ENCODE measurements at regions of chr14 and their contacts with region 1.

Region 1: GRCh38 chr14:69242311-69243224 is 17.4 kb upstream of the GALNT16 start:
- DNase-seq: peak; percentile 77
- H3K4me3 ChIP-seq: peak overlapping the region in 1 of 4 donors; percentile 1
- H3K27ac ChIP-seq: peak overlapping the region in 3 of 4 donors; percentile 42 to 59 (median 50)
- H3K4me1 ChIP-seq: peaks cover 2 to 15% (median 11%) of the 10 kb centered on the region in 4 donors
- H3K27me3 ChIP-seq: no peaks in the 10 kb centered on the region
- CTCF ChIP-seq: peak; percentile 69 to 84 (median 79)
- EP300 ChIP-seq: no peak
- POLR2A ChIP-seq: no peak

Region 2: DNA sequence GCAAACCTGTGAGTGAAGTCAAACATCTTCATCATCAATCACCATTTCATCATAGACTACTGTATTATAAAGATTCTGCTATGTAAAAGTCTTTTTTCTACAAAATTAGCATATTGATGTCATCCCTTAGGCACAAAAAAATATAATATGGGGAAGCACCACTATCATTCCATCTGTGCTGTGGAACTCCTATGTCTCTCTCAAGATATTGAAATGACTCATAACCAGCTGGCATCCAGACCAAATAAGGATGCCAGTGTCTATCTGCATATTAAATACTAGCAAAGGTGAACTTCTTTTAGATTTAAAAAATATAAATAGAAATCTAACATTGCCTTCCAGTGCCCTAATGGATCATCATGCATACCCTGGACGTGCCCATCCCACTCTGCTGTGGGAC is 71.7 kb before region 1 on chr14:
- intact Hi-C with region 1: no loop called
- DNase-seq: no peak
- H3K4me3 ChIP-seq: no peak overlapping the region
- H3K27ac ChIP-seq: no peak overlapping the region
- H3K4me1 ChIP-seq: no peaks in the 10 kb centered on the region
- H3K27me3 ChIP-seq: no peaks in the 10 kb centered on the region
- CTCF ChIP-seq: no peak
- EP300 ChIP-seq: no peak
- POLR2A ChIP-seq: no peak

Region 3: GRCh38 chr14:69346710-69347109 is 104.1 kb after region 1 on chr14:
- intact Hi-C with region 1: loop called (anchors 5 kb)
- DNase-seq: no peak
- H3K4me3 ChIP-seq: no peak overlapping the region
- H3K27ac ChIP-seq: no peak overlapping the region
- H3K4me1 ChIP-seq: peaks cover 0 to 12% (median 8%) of the 10 kb centered on the region in 4 donors
- H3K27me3 ChIP-seq: no peaks in the 10 kb centered on the region
- CTCF ChIP-seq: peak in 3 of 4 experiments; percentile 26 to 43 (median 40)
- EP300 ChIP-seq: no peak
- POLR2A ChIP-seq: no peak

Region 4: GRCh38 chr14:69398053-69398817 is 155.7 kb after region 1 on chr14 and contains the starts of genes ERH and SLC39A9:
- intact Hi-C with region 1: loop called (anchors 5 kb)
- DNase-seq: peak; percentile 98
- H3K4me3 ChIP-seq: peak within 1 kb of the TSS; percentile 71 to 91 (median 84)
- H3K27ac ChIP-seq: peak within 1 kb of the TSS; percentile 88 to 94 (median 90)
- H3K4me1 ChIP-seq: peaks cover 0 to 55% (median 43%) of the 10 kb centered on the region in 4 donors
- H3K27me3 ChIP-seq: no peaks in the 10 kb centered on the region
- CTCF ChIP-seq: no peak
- EP300 ChIP-seq: peak in 1 of 4 donors; percentile 46
- POLR2A ChIP-seq: peak; percentile 29 to 65
- total RNA-seq, gene ERH: 65.6 to 106 (median 87.9) TPM
- total RNA-seq, gene SLC39A9: 39.0 to 47.4 (median 42.0) TPM

Region 5: GRCh38 chr14:69460093-69460701 is 217.6 kb after region 1 on chr14:
- intact Hi-C with region 1: loop called (anchors 1 kb)
- DNase-seq: peak; percentile 77
- H3K4me3 ChIP-seq: no peak overlapping the region
- H3K27ac ChIP-seq: peak overlapping the region in 2 of 4 donors; percentile 28 to 38
- H3K4me1 ChIP-seq: no peaks in the 10 kb centered on the region
- H3K27me3 ChIP-seq: no peaks in the 10 kb centered on the region
- CTCF ChIP-seq: peak; percentile 51 to 70 (median 66)
- EP300 ChIP-seq: no peak
- POLR2A ChIP-seq: no peak

Region 6: DNA sequence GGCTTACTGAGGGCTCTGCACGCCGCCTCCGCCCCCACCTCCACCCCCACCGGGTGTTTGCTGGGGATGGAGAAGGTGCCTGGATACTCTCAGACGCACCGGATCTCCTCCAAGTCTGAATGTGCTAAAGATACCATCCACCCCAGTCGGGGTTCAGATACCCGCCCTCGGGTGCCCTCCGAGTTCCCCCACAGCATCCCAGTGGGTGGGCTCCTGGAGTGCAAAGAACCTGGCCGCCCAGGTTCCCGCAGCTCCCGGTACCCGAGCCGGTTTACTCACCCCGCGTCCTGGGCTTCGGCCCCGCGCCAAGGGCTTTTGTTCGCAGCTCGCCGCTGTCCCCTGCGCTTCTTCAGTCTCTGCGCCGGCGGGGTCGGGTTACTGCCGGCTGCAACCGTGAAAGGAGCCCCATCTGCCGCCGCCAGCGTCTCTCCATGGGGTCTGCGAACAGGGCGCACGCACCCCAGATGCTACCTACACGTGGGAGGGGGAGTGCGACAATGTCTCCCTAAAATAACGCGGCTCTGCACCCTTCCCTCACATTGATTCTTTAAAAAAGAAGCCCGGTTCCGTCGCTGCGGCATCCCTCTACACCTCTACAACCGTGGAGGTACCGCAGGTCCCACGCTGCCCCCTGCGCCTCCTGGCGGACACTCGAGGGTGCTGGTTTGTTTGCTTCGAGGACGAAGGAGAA is 331.8 kb after region 1 on chr14 and contains the start of gene CCDC177:
- intact Hi-C with region 1: loop called (anchors 5 kb)
- DNase-seq: no peak
- H3K4me3 ChIP-seq: peak within 1 kb of the TSS in 3 of 4 donors; percentile 4 to 46 (median 30)
- H3K27ac ChIP-seq: no peak within 1 kb of the TSS
- H3K4me1 ChIP-seq: peaks cover 0 to 38% (median 36%) of the 10 kb centered on the region in 4 donors
- H3K27me3 ChIP-seq: peaks cover 37 to 81% (median 62%) of the 10 kb centered on the region in 3 donors
- CTCF ChIP-seq: peak in 3 of 4 experiments; percentile 54 to 74 (median 61)
- EP300 ChIP-seq: no peak
- POLR2A ChIP-seq: no peak
- total RNA-seq, gene CCDC177: not detected

Region 7: GRCh38 chr14:69766984-69767368 is 524.4 kb after region 1 on chr14 and contains the start of gene SRSF5:
- intact Hi-C with region 1: loop called (anchors 10 kb)
- DNase-seq: peak; percentile 99
- H3K4me3 ChIP-seq: peak within 1 kb of the TSS; percentile 72 to 99 (median 91)
- H3K27ac ChIP-seq: peak within 1 kb of the TSS; percentile 98 to 100 (median 100)
- H3K4me1 ChIP-seq: peaks cover 0 to 45% (median 41%) of the 10 kb centered on the region in 4 donors
- H3K27me3 ChIP-seq: no peaks in the 10 kb centered on the region
- CTCF ChIP-seq: no peak
- EP300 ChIP-seq: peak in 1 of 4 donors; percentile 14
- POLR2A ChIP-seq: peak; percentile 97 to 99
- total RNA-seq, gene SRSF5: 263 to 366 (median 303) TPM

Measured in sigmoid colon (tissue), 7 donors.